Activated naive CD4-positive, alpha-beta T cell treated with anti-CD3 and anti-CD28 coated beads for 36 hours (primary cell): ENCODE measurements at regions of chr7 and their contacts with region 1.

Region 1: GRCh38 chr7:55557666-55558188 is 14.6 kb downstream of the VOPP1 start:
- DNase-seq: peak; percentile 39
- H3K4me3 Mint-ChIP-seq: no peak overlapping the region
- H3K27ac Mint-ChIP-seq: peak overlapping the region; percentile 50
- H3K4me1 Mint-ChIP-seq: peaks cover 90% of the 10 kb centered on the region
- H3K27me3 Mint-ChIP-seq: no peaks in the 10 kb centered on the region

Region 2: DNA sequence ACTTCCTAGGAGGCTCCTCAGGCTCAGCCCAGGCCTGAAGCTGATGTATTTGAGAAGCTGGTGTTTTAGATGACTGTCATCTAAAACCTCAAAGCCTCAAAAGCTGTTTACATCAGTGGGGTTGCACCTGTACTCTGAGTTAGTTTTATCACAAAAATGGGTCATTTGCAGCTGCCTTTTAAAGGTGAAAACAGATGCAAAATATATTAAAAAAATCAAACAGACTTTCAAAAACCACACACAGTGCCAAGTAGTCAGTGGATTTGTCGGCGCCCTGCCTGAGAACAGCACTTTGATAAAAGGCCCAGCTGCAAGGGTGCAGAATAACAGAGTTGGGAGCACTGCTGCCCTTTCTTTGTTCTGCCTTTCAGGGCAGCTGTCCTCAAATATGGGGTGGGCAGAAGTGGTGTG is 88.5 kb before region 1 on chr7:
- CTCF ChIA-PET with region 1: no interaction called
- intact Hi-C with region 1: no loop called
- DNase-seq: peak; percentile 53
- H3K4me3 Mint-ChIP-seq: no peak overlapping the region
- H3K27ac Mint-ChIP-seq: peak overlapping the region; percentile 83
- H3K4me1 Mint-ChIP-seq: peaks cover 72% of the 10 kb centered on the region
- H3K27me3 Mint-ChIP-seq: no peaks in the 10 kb centered on the region

Region 3: GRCh38 chr7:55546829-55547228 is 10.9 kb before region 1 on chr7:
- CTCF ChIA-PET with region 1: interaction called, 4 read pairs
- intact Hi-C with region 1: loop called (anchors 1 kb)
- DNase-seq: peak; percentile 78
- H3K4me3 Mint-ChIP-seq: no peak overlapping the region
- H3K27ac Mint-ChIP-seq: no peak overlapping the region
- H3K4me1 Mint-ChIP-seq: peaks cover 77% of the 10 kb centered on the region
- H3K27me3 Mint-ChIP-seq: no peaks in the 10 kb centered on the region